ENCODE measurements at regions of chr12 and their contacts with region 1.

Region 1: DNA sequence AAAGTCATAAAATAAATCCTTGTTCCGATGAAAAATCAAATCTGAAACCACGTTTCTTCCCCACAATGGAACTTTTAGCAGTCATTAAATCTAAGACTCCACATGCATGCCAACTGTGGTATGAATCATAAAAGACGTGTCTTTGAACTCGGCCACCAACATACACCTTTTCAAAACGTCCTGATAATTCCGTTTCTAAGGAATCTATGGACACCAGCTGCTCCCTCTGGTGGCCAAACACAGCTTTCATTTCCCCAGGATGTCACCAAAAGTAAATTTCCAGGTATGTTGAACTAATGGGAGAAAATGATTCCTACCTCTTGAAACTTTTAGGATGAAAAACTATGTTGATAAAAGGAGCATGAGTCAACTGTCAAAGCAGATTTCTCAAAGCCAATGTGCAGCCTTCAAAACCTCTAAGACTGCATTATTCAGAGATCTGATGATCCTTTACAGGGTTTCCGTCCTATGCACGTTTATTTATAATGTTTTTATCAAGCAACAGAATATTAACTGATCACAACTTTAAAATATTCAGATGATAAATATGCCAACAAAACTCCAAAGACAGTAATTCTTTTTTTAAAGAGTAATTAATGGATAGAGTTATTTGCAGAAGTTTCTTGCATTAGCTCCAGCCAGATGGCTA is 96.2 kb downstream of the CIT start:
- DNase-seq: peak; percentile 72
- H3K4me3 Mint-ChIP-seq: peak overlapping the region; percentile 47
- H3K27ac Mint-ChIP-seq: no peak overlapping the region
- H3K4me1 Mint-ChIP-seq: peaks cover 5% of the 10 kb centered on the region
- H3K27me3 Mint-ChIP-seq: no peaks in the 10 kb centered on the region
- CTCF ChIP-seq: peak; percentile 75

Region 2: GRCh38 chr12:119667577-119668323 is 113.2 kb before region 1 on chr12 and contains the start of gene PRKAB1:
- CTCF ChIA-PET with region 1: interaction called, 13 read pairs
- POLR2A ChIA-PET with region 1: interaction called, 4 read pairs
- intact Hi-C with region 1: loop called (anchors 5 kb)
- DNase-seq: peak; percentile 98
- H3K4me3 Mint-ChIP-seq: peak within 1 kb of the TSS; percentile 85
- H3K27ac Mint-ChIP-seq: peak within 1 kb of the TSS; percentile 86
- H3K4me1 Mint-ChIP-seq: peaks cover 19% of the 10 kb centered on the region
- H3K27me3 Mint-ChIP-seq: no peaks in the 10 kb centered on the region
- CTCF ChIP-seq: peak; percentile 86
- total RNA-seq, gene PRKAB1: 22.5 and 27.2 TPM in 2 replicates

Region 3: DNA sequence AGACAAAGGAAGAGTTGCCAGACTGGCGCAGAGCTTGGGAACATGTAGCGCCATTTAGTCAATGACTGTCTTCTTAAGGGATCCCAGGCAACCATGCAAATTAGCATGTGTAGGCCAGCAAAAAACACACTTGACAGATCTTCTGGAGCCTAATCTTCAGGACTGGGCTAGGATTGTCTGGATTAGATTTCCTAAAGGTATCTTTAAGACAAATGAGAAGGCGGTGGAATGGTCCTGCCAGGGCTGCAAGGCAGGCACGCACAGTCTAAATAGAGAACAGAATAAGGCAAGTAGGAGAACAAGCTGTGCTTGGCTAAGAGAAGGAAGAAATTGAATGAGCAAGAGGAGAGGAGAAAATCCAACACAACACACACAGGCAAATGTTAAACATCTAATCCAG is 16.2 kb after region 1 on chr12:
- CTCF ChIA-PET with region 1: interaction called, 28 read pairs
- POLR2A ChIA-PET with region 1: no interaction called
- intact Hi-C with region 1: no loop called
- DNase-seq: no peak
- H3K4me3 Mint-ChIP-seq: no peak overlapping the region
- H3K27ac Mint-ChIP-seq: no peak overlapping the region
- H3K4me1 Mint-ChIP-seq: no peaks in the 10 kb centered on the region
- H3K27me3 Mint-ChIP-seq: no peaks in the 10 kb centered on the region
- CTCF ChIP-seq: no peak

Region 4: GRCh38 chr12:119822046-119822445 is 41.1 kb after region 1 on chr12:
- CTCF ChIA-PET with region 1: interaction called, 12 read pairs
- POLR2A ChIA-PET with region 1: no interaction called
- intact Hi-C with region 1: no loop called
- DNase-seq: no peak
- H3K4me3 Mint-ChIP-seq: no peak overlapping the region
- H3K27ac Mint-ChIP-seq: no peak overlapping the region
- H3K4me1 Mint-ChIP-seq: no peaks in the 10 kb centered on the region
- H3K27me3 Mint-ChIP-seq: no peaks in the 10 kb centered on the region
- CTCF ChIP-seq: no peak

Region 5: DNA sequence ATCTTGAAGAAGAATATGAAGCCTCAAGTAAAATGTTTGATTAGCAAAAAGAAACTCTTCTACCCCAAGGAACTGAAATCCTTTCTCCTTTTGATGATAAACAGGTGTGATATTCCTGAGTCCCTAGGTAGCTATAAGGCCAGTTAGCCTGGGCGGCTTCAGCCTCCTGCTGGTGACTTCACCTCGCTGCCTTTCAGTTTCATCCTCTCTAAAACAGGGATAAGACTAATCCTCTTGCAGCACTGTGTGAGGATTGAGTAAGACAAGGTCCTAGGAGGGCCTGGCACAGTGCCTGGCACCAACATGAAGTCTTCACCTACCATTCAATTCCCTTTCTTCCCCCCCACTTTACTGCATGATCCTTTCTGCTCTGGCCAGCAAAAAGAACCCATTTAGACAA is 54.2 kb after region 1 on chr12:
- CTCF ChIA-PET with region 1: no interaction called
- POLR2A ChIA-PET with region 1: no interaction called
- intact Hi-C with region 1: no loop called
- DNase-seq: peak; percentile 61
- H3K4me3 Mint-ChIP-seq: no peak overlapping the region
- H3K27ac Mint-ChIP-seq: peak overlapping the region; percentile 16
- H3K4me1 Mint-ChIP-seq: no peaks in the 10 kb centered on the region
- H3K27me3 Mint-ChIP-seq: no peaks in the 10 kb centered on the region
- CTCF ChIP-seq: no peak

Region 6: GRCh38 chr12:119885549-119885948 is 104.6 kb after region 1 on chr12:
- CTCF ChIA-PET with region 1: no interaction called
- POLR2A ChIA-PET with region 1: no interaction called
- intact Hi-C with region 1: no loop called
- DNase-seq: no peak
- H3K4me3 Mint-ChIP-seq: no peak overlapping the region
- H3K27ac Mint-ChIP-seq: no peak overlapping the region
- H3K4me1 Mint-ChIP-seq: no peaks in the 10 kb centered on the region
- H3K27me3 Mint-ChIP-seq: no peaks in the 10 kb centered on the region
- CTCF ChIP-seq: no peak

Region 7: DNA sequence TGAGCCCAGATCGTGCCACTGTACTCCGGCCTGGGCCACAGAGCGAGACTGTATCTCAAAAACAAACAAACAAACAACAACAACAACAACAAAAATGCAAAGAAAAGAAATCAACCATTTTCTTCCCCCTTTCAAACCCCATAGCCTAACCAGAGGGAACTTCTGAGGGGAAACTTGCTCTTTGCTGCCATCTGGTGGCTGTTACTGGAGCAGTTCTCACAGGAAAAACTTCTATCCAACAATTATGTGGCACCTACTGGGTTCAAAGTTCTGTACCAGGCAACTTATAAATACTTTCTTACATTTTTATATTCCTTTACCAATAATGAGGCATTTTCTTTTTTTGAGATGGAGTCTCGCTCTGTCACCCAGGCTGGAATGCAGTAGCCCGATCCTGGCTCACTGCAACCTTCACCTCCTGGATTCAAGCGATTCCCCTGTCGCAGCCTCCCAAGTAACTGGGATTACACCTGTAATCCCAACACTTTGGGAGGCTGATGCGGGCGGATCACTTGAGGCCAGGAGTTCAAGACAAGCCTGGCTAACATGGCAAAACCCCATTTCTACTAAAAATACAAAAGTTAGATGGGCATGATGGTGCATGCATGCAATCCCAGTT is 157.2 kb after region 1 on chr12:
- CTCF ChIA-PET with region 1: interaction called, 3 read pairs
- POLR2A ChIA-PET with region 1: no interaction called
- intact Hi-C with region 1: loop called (anchors 10 kb)
- DNase-seq: peak; percentile 73
- H3K4me3 Mint-ChIP-seq: no peak overlapping the region
- H3K27ac Mint-ChIP-seq: no peak overlapping the region
- H3K4me1 Mint-ChIP-seq: no peaks in the 10 kb centered on the region
- H3K27me3 Mint-ChIP-seq: no peaks in the 10 kb centered on the region
- CTCF ChIP-seq: peak; percentile 74